Activated naive CD4-positive, alpha-beta T cell treated with anti-CD3 and anti-CD28 coated beads for 36 hours (primary cell): ENCODE measurements at regions of chr13 and their contacts with region 1.

Region 1: DNA sequence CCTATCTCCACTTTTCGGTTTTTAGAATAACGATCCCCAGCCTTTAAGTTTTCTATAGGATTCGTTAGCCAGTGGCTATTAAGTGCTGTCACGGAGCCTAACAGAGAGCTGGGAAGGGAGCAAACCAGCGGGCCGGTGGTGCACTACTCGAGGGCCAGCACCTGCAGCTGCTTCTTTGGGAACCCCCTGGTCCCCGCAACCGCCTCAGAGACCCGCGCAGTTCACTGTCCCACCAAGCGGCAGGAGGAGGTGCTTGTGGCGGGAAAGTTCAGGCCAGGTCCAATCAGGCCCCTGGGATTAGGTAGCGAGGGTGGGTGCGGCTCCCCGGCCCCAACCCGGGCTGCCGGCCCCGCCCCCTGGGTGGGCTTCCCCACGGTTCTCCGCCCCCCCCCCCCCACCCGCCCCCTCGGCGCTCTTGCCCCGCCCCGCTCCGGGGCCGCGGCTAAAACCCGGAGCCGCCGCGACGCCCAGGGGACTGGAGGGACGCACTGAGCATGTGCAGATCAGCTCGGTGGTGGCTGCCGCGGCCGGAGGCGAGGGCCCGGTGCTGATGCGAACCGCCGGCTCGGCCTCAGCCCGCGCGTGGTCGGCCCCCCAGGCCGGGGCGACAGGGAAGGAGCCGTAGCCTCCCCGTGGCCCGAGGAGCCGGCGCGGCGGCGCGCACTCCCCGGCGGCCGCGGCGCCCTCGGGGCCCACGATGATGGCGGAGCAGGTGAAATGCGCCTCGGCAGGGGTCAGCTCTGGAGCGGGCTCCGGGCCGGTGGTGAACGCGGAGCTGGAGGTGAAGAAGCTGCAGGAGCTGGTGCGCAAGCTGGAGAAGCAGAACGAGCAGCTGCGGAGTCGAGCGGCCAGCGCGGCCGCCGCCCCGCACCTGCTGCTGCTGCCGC is at the start of gene SLAIN1:
- DNase-seq: peak; percentile 79
- H3K4me3 Mint-ChIP-seq: peak within 1 kb of the TSS; percentile 96
- H3K27ac Mint-ChIP-seq: peak within 1 kb of the TSS; percentile 59
- H3K4me1 Mint-ChIP-seq: peaks cover 30% of the 10 kb centered on the region
- H3K27me3 Mint-ChIP-seq: no peaks in the 10 kb centered on the region
- total RNA-seq, gene SLAIN1: 18.0 to 21.7 TPM

Region 2: GRCh38 chr13:75715601-75716523 is 1981.6 kb before region 1 on chr13:
- CTCF ChIA-PET with region 1: no interaction called
- intact Hi-C with region 1: no loop called
- DNase-seq: peak; percentile 33
- H3K4me3 Mint-ChIP-seq: no peak overlapping the region
- H3K27ac Mint-ChIP-seq: no peak overlapping the region
- H3K4me1 Mint-ChIP-seq: peaks cover 3% of the 10 kb centered on the region
- H3K27me3 Mint-ChIP-seq: no peaks in the 10 kb centered on the region

Region 3: GRCh38 chr13:77715233-77715891 is 17.9 kb after region 1 on chr13:
- CTCF ChIA-PET with region 1: interaction called, 4 read pairs
- intact Hi-C with region 1: loop called (anchors 1 kb)
- DNase-seq: no peak
- H3K4me3 Mint-ChIP-seq: no peak overlapping the region
- H3K27ac Mint-ChIP-seq: no peak overlapping the region
- H3K4me1 Mint-ChIP-seq: peaks cover 41% of the 10 kb centered on the region
- H3K27me3 Mint-ChIP-seq: no peaks in the 10 kb centered on the region

Region 4: DNA sequence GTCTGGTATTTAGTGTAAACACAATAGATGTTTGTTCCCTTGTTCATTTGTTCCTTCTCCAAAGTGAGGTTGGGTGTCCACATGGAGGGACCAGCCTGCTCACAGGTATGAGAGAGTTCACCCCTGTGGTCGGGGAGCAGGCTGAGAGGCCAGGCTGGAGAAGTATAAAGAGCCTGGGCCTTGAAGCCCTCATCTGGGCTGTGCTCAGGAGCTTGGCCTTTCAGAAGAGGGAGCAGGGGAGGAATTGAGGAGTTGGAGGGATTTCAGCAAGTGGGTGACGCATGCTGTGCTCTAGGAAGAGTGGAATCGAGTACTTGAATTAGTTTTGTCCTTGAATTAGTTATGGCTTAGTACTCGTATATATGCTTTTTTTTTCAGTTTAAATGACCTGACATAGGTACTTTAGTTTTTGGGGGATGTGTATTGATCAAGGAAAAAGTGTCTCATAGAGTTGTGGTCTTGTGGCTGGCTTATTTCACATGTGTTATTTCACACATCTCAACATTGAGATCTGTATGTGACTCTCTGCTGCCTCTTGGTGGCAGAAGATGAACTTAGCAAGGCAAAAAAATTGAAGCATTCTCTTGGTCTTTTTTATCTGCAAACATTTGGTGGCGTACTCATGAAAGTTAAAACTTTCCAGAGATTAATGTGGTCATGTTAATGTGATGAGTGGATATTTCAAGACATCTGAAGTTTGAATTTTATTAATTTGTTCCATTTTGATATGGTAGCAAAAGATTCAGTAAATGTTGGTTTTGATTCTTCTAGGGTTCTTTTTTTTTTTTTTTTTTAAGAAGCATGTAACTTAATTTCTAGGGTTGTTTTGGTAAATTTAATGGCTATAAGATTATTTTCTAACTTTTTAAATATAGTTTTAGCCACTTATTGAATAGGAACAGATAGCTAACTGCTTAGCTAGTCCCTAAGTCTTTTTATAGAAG is 54.3 kb after region 1 on chr13:
- CTCF ChIA-PET with region 1: interaction called, 33 read pairs
- intact Hi-C with region 1: loop called (anchors 1 kb)
- DNase-seq: peak; percentile 73
- H3K4me3 Mint-ChIP-seq: no peak overlapping the region
- H3K27ac Mint-ChIP-seq: no peak overlapping the region
- H3K4me1 Mint-ChIP-seq: peaks cover 18% of the 10 kb centered on the region
- H3K27me3 Mint-ChIP-seq: no peaks in the 10 kb centered on the region

Region 5: DNA sequence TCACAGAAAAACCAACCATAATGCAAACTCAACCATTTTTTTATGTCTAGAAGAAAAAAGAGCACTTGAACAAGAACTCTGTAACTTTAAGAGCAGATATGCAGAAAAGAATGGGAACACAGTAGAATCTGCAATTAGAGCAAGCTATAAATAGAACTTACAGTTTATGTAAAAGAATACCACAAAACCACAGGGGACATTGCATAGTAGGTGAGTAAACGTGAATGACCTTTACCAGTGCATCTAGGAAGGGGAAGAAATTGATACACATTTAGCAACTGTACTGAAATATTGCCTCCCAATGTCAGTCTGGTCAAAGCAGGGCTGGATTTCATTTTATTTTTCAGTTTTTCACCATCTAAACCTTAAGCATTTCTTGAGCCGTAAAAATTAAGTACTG is 463.3 kb after region 1 on chr13:
- CTCF ChIA-PET with region 1: no interaction called
- intact Hi-C with region 1: no loop called
- DNase-seq: no peak
- H3K4me3 Mint-ChIP-seq: no peak overlapping the region
- H3K27ac Mint-ChIP-seq: no peak overlapping the region
- H3K4me1 Mint-ChIP-seq: no peaks in the 10 kb centered on the region
- H3K27me3 Mint-ChIP-seq: peaks cover 7% of the 10 kb centered on the region

Region 6: GRCh38 chr13:78658635-78659449 is 961.4 kb after region 1 on chr13 and contains the start of gene OBI1:
- CTCF ChIA-PET with region 1: no interaction called
- intact Hi-C with region 1: loop called (anchors 2 kb)
- DNase-seq: peak; percentile 90
- H3K4me3 Mint-ChIP-seq: peak within 1 kb of the TSS; percentile 100
- H3K27ac Mint-ChIP-seq: peak within 1 kb of the TSS; percentile 96
- H3K4me1 Mint-ChIP-seq: peaks cover 35% of the 10 kb centered on the region
- H3K27me3 Mint-ChIP-seq: no peaks in the 10 kb centered on the region
- total RNA-seq, gene OBI1: 16.0 to 17.7 TPM

Region 7: DNA sequence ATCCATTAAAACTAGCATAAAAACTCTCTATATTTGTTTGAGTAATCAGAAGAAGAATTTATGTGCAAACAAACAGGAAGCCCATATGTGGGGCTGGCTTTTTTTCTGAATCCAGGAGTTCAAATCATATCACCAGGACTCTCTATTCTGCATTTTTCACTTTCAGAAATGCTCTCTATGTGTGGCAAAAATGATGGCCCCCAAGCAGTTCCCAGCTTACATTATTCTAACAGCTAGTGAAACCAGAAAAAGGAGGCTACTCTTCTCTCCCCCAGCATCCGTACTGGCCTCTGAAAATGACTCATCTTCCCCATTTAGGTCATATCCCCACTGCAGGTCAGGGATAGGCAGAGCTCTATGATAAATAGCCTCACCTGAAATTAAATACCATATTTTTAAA is 1688.2 kb after region 1 on chr13:
- CTCF ChIA-PET with region 1: no interaction called
- intact Hi-C with region 1: loop called (anchors 5 kb)
- DNase-seq: peak; percentile 40
- H3K4me3 Mint-ChIP-seq: no peak overlapping the region
- H3K27ac Mint-ChIP-seq: no peak overlapping the region
- H3K4me1 Mint-ChIP-seq: peaks cover 71% of the 10 kb centered on the region
- H3K27me3 Mint-ChIP-seq: no peaks in the 10 kb centered on the region